ENCODE measurements at regions of chr15 and their contacts with region 1.

Region 1: GRCh38 chr15:40941528-40942336 is 11.5 kb upstream of the CHAC1 start:
- DNase-seq: peak; percentile 75
- H3K4me3 Mint-ChIP-seq: peak overlapping the region; percentile 63
- H3K27ac Mint-ChIP-seq: no peak overlapping the region
- H3K4me1 Mint-ChIP-seq: peaks cover 11% of the 10 kb centered on the region
- H3K27me3 Mint-ChIP-seq: no peaks in the 10 kb centered on the region
- CTCF ChIP-seq: peak; percentile 73

Region 2: GRCh38 chr15:40906091-40906990 is 35.4 kb before region 1 on chr15:
- CTCF ChIA-PET with region 1: interaction called, 15 read pairs
- POLR2A ChIA-PET with region 1: interaction called, 3 read pairs
- intact Hi-C with region 1: loop called (anchors 1 kb)
- DNase-seq: peak; percentile 97
- H3K4me3 Mint-ChIP-seq: peak overlapping the region; percentile 10
- H3K27ac Mint-ChIP-seq: peak overlapping the region; percentile 51
- H3K4me1 Mint-ChIP-seq: peaks cover 35% of the 10 kb centered on the region
- H3K27me3 Mint-ChIP-seq: no peaks in the 10 kb centered on the region
- CTCF ChIP-seq: peak; percentile 71

Region 3: GRCh38 chr15:40952901-40953712 is 11.4 kb after region 1 on chr15 and contains the start of gene CHAC1:
- CTCF ChIA-PET with region 1: interaction called, 59 read pairs
- POLR2A ChIA-PET with region 1: interaction called, 11 read pairs
- intact Hi-C with region 1: no loop called
- DNase-seq: peak; percentile 98
- H3K4me3 Mint-ChIP-seq: peak within 1 kb of the TSS; percentile 87
- H3K27ac Mint-ChIP-seq: peak within 1 kb of the TSS; percentile 83
- H3K4me1 Mint-ChIP-seq: peaks cover 25% of the 10 kb centered on the region
- H3K27me3 Mint-ChIP-seq: no peaks in the 10 kb centered on the region
- CTCF ChIP-seq: no peak
- total RNA-seq, gene CHAC1: 35.5 and 49.4 TPM in 2 replicates

Region 4: DNA sequence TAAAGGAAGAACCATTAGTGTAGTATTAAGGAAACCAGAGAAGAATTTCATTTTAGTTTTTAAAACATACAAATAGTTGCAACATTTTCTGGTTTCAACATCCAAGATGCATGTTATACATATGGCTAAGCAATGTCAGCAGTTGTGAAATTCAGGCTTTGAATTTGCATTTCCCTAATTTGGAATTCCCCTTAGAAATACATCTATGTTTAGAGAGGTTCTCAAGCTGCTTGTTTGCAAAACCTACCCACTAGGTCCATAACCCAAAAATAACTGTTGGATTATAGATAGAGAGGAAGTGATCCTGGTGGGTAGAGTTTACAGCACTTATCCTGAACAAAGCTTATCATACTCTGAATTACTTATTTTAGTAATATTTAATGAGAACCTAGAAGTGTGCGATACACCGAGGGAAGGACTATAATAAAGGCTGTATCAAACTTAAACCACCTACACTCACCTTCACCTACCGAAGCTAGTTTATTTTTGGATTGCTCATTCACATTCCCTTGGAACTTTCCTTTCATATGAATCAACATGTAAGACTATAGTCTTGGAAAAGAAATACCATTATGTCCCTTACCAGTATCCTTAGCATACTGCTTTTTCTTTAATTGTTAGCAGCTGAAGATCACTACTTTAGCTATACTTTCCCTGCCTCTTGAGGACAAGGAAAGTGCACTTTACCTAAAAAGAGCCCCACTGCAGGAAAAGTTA is 72.1 kb after region 1 on chr15:
- CTCF ChIA-PET with region 1: interaction called, 16 read pairs
- POLR2A ChIA-PET with region 1: no interaction called
- intact Hi-C with region 1: no loop called
- DNase-seq: peak; percentile 67
- H3K4me3 Mint-ChIP-seq: no peak overlapping the region
- H3K27ac Mint-ChIP-seq: peak overlapping the region; percentile 81
- H3K4me1 Mint-ChIP-seq: peaks cover 11% of the 10 kb centered on the region
- H3K27me3 Mint-ChIP-seq: no peaks in the 10 kb centered on the region
- CTCF ChIP-seq: no peak

Region 5: GRCh38 chr15:41031232-41032078 is 89.7 kb after region 1 on chr15:
- CTCF ChIA-PET with region 1: interaction called, 12 read pairs
- POLR2A ChIA-PET with region 1: no interaction called
- intact Hi-C with region 1: no loop called
- DNase-seq: no peak
- H3K4me3 Mint-ChIP-seq: no peak overlapping the region
- H3K27ac Mint-ChIP-seq: peak overlapping the region; percentile 7
- H3K4me1 Mint-ChIP-seq: no peaks in the 10 kb centered on the region
- H3K27me3 Mint-ChIP-seq: no peaks in the 10 kb centered on the region
- CTCF ChIP-seq: no peak